ENCODE measurements at regions of chrX and their contacts with region 1.

Region 1: DNA sequence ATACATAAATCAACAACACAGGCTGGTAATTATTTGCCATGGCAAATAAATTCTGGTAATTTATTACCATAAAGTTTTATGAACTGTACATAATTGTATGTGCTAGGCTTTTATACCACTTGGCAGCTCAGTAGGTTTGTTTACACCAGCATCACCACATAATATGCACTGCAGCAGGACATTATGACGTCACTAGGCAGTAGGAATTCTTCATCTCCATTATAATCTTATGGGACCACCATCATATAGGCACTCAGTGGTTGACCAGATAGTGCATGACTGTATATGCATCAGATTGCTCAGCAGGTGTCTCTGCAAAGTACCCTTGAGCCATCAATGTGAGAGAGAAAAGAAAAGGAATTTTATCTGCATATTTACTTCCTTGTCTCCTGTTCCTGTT is 295.4 kb downstream of the CFAP47 start:
- DNase-seq: no peak
- H3K4me3 ChIP-seq: no peak overlapping the region
- H3K27ac ChIP-seq: no peak overlapping the region
- H3K4me1 ChIP-seq: no peaks in the 10 kb centered on the region
- H3K27me3 ChIP-seq: no peaks in the 10 kb centered on the region
- CTCF ChIP-seq: no peak
- EP300 ChIP-seq: no peak
- POLR2A ChIP-seq: no peak

Region 2: GRCh38 chrX:35590210-35590609 is 624.7 kb before region 1 on chrX:
- intact Hi-C with region 1: loop called in 1 of 4 experiments (anchors 5 kb)
- DNase-seq: no peak
- H3K4me3 ChIP-seq: no peak overlapping the region
- H3K27ac ChIP-seq: no peak overlapping the region
- H3K4me1 ChIP-seq: no peaks in the 10 kb centered on the region
- H3K27me3 ChIP-seq: no peaks in the 10 kb centered on the region
- CTCF ChIP-seq: no peak
- EP300 ChIP-seq: no peak
- POLR2A ChIP-seq: no peak

Measured in ovary (tissue), 10 donors.